Activated CD4-positive, alpha-beta T cell treated with anti-CD3 and anti-CD28 coated beads, Interleukin-2, amount 10 ng/mL, durations not matched to agents 24 days and 14 days (primary cell): ENCODE measurements at regions of chr3 and their contacts with region 1.

Region 1: DNA sequence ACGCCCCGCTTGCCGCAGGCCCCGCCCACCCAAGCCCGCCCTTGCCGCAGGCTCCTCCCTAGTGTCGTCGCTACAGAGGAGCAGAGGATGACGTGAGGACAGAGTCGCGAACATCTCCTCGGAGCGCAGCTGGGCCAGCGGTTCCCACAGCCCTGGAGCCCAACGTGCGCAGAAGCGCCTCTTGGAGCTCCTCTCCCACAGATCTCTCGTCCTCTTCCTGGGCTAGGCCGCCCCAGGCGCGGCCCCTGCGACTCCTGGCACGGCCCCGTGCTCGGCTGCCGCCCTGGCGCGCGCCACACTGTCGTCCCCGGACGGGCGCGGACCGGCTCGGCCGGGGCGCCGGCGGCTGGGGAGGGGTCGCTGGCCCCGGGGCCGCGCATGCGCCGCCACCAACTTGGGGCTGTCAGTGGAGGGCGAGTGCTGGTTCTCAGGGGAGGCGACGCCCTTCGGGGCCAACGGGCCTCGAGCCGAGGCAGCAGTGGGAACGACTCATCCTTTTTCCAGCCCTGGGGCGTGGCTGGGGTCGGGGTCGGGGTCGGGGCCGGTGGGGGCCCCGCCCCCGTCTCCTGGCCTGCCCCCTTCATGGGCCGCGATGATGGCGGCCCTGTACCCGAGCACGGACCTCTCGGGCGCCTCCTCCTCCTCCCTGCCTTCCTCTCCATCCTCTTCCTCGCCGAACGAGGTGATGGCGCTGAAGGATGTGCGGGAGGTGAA is at the start of gene TRPC1:
- DNase-seq: peak; percentile 92
- H3K4me3 Mint-ChIP-seq: peak within 1 kb of the TSS; percentile 89
- H3K27ac Mint-ChIP-seq: peak within 1 kb of the TSS; percentile 75
- H3K4me1 Mint-ChIP-seq: peaks cover 10% of the 10 kb centered on the region
- H3K27me3 Mint-ChIP-seq: peaks cover 63% of the 10 kb centered on the region
- total RNA-seq, gene TRPC1: 0.92 and 1.7 TPM in 2 replicates

Region 2: GRCh38 chr3:142578327-142579223 is 145.6 kb before region 1 on chr3 and contains the start of gene ATR:
- intact Hi-C with region 1: loop called (anchors 2 kb)
- DNase-seq: peak; percentile 99
- H3K4me3 Mint-ChIP-seq: peak within 1 kb of the TSS; percentile 99
- H3K27ac Mint-ChIP-seq: peak within 1 kb of the TSS; percentile 99
- H3K4me1 Mint-ChIP-seq: peaks cover 42% of the 10 kb centered on the region
- H3K27me3 Mint-ChIP-seq: peaks cover 15% of the 10 kb centered on the region
- total RNA-seq, gene ATR: 34.2 and 35.0 TPM in 2 replicates

Region 3: DNA sequence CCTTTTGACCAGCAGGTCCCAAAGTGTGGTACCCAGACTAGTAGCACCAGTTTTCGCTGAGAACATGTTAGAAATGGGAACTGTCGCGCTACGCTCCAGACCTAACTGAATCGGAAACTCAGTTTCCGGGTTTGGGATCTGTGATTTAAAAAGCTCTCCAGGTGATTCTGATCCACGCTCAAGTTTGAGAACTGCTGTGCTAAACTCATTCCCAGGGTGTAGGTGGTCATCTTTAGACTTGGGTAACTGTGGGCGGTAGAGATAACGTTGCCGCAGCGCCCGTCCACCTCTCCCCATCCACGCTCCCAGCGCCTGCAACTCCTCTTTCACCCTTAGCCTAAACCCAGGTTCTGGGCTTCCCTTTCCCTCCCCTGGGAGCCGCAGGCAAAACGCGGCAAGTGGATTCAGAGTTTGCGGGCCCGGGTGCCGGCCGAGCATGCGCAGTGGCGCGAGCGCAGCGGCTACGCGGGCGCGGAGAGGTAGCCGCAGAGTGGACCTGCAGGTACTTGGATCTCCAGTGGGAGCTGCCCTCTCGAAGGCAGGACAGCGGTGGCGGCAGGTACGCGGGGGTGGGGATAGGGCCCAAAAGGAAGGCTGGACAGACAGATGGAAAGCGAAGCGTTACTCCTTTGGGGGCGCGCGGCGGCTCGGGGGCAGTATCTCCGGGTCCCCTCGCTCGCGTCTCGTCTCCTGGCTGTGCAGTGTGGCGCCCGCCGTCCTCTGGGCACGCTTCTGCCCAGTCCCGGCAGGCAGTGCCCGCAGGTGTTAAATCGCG is 128.0 kb before region 1 on chr3 and contains the start of gene PLS1:
- intact Hi-C with region 1: loop called (anchors 1 kb)
- DNase-seq: peak; percentile 98
- H3K4me3 Mint-ChIP-seq: peak within 1 kb of the TSS; percentile 99
- H3K27ac Mint-ChIP-seq: peak within 1 kb of the TSS; percentile 87
- H3K4me1 Mint-ChIP-seq: peaks cover 15% of the 10 kb centered on the region
- H3K27me3 Mint-ChIP-seq: no peaks in the 10 kb centered on the region
- total RNA-seq, gene PLS1: 4.6 TPM in 2 replicates

Region 4: DNA sequence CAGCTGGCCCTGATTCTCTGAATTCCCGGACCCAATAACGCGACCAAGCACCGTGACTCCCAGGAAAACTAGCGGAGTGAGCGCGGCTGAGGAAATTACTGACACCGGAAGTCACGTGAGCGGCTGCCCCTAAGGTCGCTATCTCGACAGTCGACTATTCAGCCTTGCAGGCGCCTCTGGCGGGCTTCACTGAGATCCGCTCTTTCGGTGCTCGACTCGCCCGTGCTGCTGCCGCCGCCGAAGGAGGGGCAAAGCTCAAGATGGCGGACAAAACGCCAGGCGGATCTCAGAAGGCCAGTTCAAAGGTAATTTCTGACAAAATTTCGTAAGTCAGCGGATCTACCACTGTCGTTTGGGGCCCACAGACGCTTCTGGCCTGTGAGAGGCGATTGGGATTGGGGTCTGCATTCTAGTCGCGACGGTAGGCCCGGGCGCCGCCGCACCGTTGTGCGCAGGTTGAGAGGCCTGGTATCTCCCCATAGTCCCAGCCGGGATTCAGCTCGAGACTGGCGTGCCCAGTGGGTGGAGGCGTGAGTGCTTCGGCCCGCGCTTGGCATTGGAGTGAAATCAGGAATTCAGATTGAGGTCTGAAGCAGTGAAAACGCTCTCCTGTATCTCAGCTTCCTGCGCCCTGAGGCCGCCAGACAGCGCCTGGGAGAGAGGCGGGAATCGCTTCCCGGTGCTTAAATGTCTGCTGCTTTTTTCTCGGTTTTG is 277.4 kb after region 1 on chr3 and contains the start of gene U2SURP:
- intact Hi-C with region 1: loop called (anchors 1 kb)
- DNase-seq: peak; percentile 97
- H3K4me3 Mint-ChIP-seq: peak within 1 kb of the TSS; percentile 96
- H3K27ac Mint-ChIP-seq: peak within 1 kb of the TSS; percentile 97
- H3K4me1 Mint-ChIP-seq: peaks cover 24% of the 10 kb centered on the region
- H3K27me3 Mint-ChIP-seq: peaks cover 8% of the 10 kb centered on the region
- total RNA-seq, gene U2SURP: 189 and 212 TPM in 2 replicates

Region 5: GRCh38 chr3:143847787-143848631 is 1123.9 kb after region 1 on chr3 and contains the start of gene SLC9A9:
- intact Hi-C with region 1: loop called (anchors 10 kb)
- DNase-seq: peak; percentile 77
- H3K4me3 Mint-ChIP-seq: peak within 1 kb of the TSS; percentile 92
- H3K27ac Mint-ChIP-seq: peak within 1 kb of the TSS; percentile 87
- H3K4me1 Mint-ChIP-seq: peaks cover 46% of the 10 kb centered on the region
- H3K27me3 Mint-ChIP-seq: peaks cover 6% of the 10 kb centered on the region
- total RNA-seq, gene SLC9A9: 1.1 and 1.3 TPM in 2 replicates